ENCODE measurements at regions of chr6 and their contacts with region 1.

Region 1: DNA sequence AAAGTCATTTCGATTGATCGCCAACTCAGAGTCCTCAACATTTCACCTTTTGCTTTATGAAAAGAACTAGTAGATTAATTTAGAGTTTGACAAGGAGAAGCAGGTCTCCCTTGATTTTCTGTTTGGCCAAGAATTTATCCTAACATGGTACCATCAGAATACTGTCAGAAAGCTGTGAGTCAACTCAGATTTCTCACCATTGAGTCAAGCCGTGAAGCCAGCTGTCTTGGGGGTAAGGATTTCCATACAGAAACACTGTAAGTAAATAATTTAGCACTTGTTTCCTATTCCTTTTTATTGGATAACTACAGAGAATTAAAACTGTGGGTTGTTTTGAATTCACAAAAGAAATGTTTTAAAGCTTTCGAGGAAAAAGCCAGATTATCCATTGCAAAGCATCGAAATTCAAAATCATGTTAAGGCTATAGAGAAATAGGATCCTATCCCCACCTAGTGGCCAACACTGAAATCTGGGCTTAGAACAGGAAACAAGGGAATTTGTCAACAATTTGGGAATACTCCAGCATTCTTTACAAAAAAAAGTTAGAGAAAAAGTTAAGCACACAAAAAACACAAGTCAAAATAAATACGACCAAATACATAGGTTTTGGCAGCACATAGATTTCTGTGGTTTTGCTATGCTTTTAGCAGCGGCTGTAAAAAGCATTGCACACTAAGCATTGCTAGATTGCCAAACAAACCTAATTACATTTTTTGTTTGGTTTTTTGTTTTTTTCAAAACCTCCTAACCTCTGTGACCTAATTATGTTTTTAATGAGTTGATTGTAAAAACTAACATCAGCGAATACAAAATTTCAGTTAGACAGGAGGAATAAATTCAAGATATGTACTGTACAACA is 44.2 kb downstream of the COL11A2 start:
- DNase-seq: no peak
- H3K4me3 ChIP-seq: no peak overlapping the region
- H3K27ac ChIP-seq: no peak overlapping the region
- H3K4me1 ChIP-seq: peaks cover 0 to 2% (median 0%) of the 10 kb centered on the region in 4 experiments; a peak in 1 of 7 replicates
- H3K27me3 ChIP-seq: no peaks in the 10 kb centered on the region
- CTCF ChIP-seq: peak in 2 of 3 experiments; percentile 61 to 72; a peak in 3 of 4 replicates
- EP300 ChIP-seq: no peak
- POLR2A ChIP-seq: no peak
- RAD21 ChIP-seq: peak; percentile 75 to 80

Region 2: GRCh38 chr6:32977953-32978324 is 170.1 kb before region 1 on chr6:
- CTCF ChIA-PET with region 1: no interaction called
- POLR2A ChIA-PET with region 1: no interaction called
- DNase-seq: no peak
- H3K4me3 ChIP-seq: no peak overlapping the region
- H3K27ac ChIP-seq: no peak overlapping the region
- H3K4me1 ChIP-seq: peaks cover 0 to 11% (median 6%) of the 10 kb centered on the region in 4 experiments; a peak in 5 of 7 replicates
- H3K27me3 ChIP-seq: no peaks in the 10 kb centered on the region
- CTCF ChIP-seq: no peak
- EP300 ChIP-seq: no peak
- POLR2A ChIP-seq: peak in 1 of 2 experiments; percentile 12; a peak in 1 of 3 replicates
- RAD21 ChIP-seq: no peak

Region 3: DNA sequence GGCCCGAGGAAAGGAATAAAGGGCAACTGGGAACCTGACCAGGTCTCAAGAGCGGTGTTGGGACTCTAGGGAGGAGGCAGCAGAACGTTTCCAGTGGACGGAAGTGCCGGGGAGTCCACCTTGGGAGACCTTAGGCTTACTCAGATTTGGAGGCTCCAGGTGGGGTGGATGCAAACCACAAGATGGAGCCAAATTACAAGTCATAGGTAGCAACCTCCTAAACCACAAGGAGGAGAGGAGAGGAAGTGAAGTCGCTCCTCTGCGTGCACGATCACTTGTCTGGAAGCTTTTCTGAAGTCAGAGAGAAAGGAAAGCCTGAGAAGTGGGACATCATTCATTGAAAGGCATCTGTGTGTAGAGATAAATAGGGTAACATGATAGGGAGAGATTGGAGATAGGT is 148.0 kb before region 1 on chr6:
- CTCF ChIA-PET with region 1: interaction called, 23 read pairs
- POLR2A ChIA-PET with region 1: interaction called, 3 read pairs
- DNase-seq: peak in 1 of 2 experiments; percentile 41
- H3K4me3 ChIP-seq: no peak overlapping the region
- H3K27ac ChIP-seq: no peak overlapping the region
- H3K4me1 ChIP-seq: no peaks in the 10 kb centered on the region
- H3K27me3 ChIP-seq: peaks cover 0 to 2% (median 0%) of the 10 kb centered on the region in 4 experiments; a peak in 2 of 7 replicates
- CTCF ChIP-seq: peak; percentile 46 to 93 (median 91)
- EP300 ChIP-seq: no peak
- POLR2A ChIP-seq: no peak
- RAD21 ChIP-seq: peak; percentile 96 to 97

Region 4: GRCh38 chr6:33104893-33105292 is 43.1 kb before region 1 on chr6:
- CTCF ChIA-PET with region 1: no interaction called
- POLR2A ChIA-PET with region 1: no interaction called
- DNase-seq: no peak
- H3K4me3 ChIP-seq: no peak overlapping the region
- H3K27ac ChIP-seq: no peak overlapping the region
- H3K4me1 ChIP-seq: no peaks in the 10 kb centered on the region
- H3K27me3 ChIP-seq: no peaks in the 10 kb centered on the region; a peak in 1 of 7 replicates
- CTCF ChIP-seq: no peak
- EP300 ChIP-seq: no peak
- POLR2A ChIP-seq: no peak
- RAD21 ChIP-seq: no peak

Region 5: GRCh38 chr6:33161354-33162331 is 13.6 kb after region 1 on chr6:
- CTCF ChIA-PET with region 1: interaction called, 69 read pairs
- POLR2A ChIA-PET with region 1: interaction called, 9 read pairs
- DNase-seq: peak in 1 of 2 experiments; percentile 97
- H3K4me3 ChIP-seq: peak overlapping the region; percentile 42 to 74 (median 62)
- H3K27ac ChIP-seq: no peak overlapping the region
- H3K4me1 ChIP-seq: peaks cover 0 to 6% (median 2%) of the 10 kb centered on the region in 4 experiments; a peak in 6 of 7 replicates
- H3K27me3 ChIP-seq: peaks cover 0 to 8% (median 2%) of the 10 kb centered on the region in 4 experiments; a peak in 4 of 7 replicates
- CTCF ChIP-seq: peak in 2 of 3 experiments; percentile 82 to 88; a peak in 3 of 4 replicates
- EP300 ChIP-seq: no peak
- POLR2A ChIP-seq: no peak
- RAD21 ChIP-seq: peak; percentile 48 to 63; a peak in 3 of 4 replicates

Measured in H1 (cell line).